ENCODE measurements at regions of chr2 and their contacts with region 1.

Region 1: GRCh38 chr2:231612179-231613053 is 19.8 kb downstream of the TEX44 start:
- DNase-seq: peak; percentile 92
- CTCF ChIP-seq: peak; percentile 80

Region 2: DNA sequence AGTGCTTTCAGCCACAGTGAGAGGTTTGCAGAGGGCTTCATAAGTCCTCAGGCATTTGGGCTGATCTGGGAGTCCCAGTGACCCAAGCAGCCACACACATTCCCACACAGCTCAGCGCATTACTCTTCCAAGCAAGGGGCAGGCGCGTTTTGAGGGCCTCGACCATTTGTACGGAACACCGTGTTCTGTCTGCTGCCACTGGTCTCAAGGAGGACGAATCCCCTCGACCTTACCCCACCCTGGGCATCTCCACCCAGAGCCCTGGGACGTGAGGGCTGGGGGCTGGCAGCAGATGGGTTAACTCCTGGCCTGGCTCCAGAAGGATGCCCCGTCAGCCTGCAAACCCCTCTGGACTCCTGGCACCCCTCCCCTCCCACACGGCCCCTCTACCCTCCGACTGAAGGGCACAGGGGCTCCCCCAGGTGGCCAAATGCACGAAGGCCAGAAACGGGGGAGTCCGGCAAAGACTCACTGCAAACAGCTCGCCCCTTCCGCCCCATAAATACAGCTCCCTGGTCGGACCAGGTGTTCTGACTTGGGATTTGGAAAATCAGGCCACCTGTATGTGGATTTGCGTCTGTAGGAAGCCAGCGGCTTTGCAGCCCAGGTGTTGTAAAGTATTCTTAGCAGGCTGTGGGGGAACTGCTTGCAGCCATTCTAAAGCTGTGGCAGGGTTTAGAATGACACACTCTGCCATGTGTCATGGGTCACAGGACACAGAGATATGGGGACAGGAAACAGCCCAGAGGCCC is 62.3 kb after region 1 on chr2:
- in situ Hi-C with region 1: loop called (anchors 10 kb)
- DNase-seq: peak; percentile 77
- CTCF ChIP-seq: peak; percentile 87

Region 3: GRCh38 chr2:231706731-231707624 is 94.6 kb after region 1 on chr2:
- in situ Hi-C with region 1: loop called (anchors 10 kb)
- DNase-seq: peak; percentile 94
- CTCF ChIP-seq: peak; percentile 92

Region 4: DNA sequence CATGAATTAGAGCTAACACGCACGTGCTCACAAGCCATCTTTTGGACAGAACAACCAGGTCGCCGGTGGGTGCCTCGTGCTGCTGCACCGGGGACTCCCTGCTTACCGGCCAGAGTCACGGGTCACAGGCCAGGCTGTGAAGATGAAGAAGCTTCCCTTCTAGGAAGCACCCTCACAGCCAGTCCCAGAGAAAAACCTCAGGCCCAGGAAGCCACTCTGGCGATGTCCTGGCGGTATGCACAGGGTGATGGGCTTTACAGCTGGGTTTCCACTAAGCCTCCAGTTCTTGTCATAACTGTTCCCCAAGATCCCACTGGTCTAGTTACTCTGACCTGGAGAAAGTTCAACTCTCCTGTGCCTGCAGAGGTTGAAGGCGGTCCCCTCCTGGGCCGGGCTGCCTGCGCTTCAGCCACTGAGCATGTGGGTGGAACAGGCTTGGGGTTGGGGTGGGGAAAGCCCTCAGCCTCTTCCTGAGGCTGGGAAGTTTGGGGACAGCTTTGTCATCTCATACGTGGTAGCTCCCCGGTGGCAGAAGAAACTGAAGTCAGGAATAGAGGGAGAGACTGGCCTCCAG is 333.9 kb after region 1 on chr2:
- in situ Hi-C with region 1: no loop called
- DNase-seq: no peak
- CTCF ChIP-seq: no peak